ENCODE measurements at regions of chr4 and their contacts with region 1.

Region 1: GRCh38 chr4:78951862-78952472 is 12.7 kb upstream of the PAQR3 start:
- DNase-seq: peak; percentile 42
- H3K4me3 ChIP-seq: no peak overlapping the region
- H3K27ac ChIP-seq: no peak overlapping the region
- H3K4me1 ChIP-seq: no peaks in the 10 kb centered on the region
- H3K27me3 ChIP-seq: peaks cover 5 to 9% of the 10 kb centered on the region in 2 experiments
- CTCF ChIP-seq: peak; percentile 47 to 50
- POLR2A ChIP-seq: no peak

Region 2: DNA sequence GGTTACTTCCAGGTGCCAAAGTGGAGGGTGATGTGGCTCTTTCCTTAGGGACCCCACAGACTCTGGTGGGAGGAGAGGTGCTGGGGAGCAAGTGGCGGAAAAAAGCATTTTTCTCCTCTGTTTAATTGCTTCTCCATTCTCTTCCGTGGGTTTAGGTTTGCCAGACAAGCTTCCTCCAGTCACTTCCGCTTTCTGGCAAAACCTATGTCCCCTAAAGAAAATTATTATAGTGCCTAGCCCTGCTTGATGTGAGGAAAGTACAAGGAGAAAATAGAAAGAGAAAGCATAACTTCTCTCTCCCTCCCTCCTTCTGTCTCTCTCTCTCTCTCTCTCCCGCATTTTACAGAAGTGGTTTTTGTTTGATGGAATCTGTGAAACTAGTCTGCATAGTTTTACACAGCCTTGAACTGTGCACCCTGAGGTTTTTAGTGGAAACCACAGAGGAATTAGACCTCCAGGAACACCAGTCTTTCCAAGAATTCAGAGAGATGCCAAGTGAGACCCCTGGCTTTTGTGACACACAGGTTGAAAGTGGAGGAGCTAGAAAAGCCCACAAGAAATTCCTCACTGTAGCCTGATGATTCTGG is 631.5 kb before region 1 on chr4:
- CTCF ChIA-PET with region 1: no interaction called
- POLR2A ChIA-PET with region 1: no interaction called
- dilution Hi-C with region 1: no loop called
- intact Hi-C with region 1: no loop called
- DNase-seq: no peak
- H3K4me3 ChIP-seq: no peak overlapping the region
- H3K27ac ChIP-seq: no peak overlapping the region
- H3K4me1 ChIP-seq: no peaks in the 10 kb centered on the region
- H3K27me3 ChIP-seq: peaks cover 0 to 2% of the 10 kb centered on the region in 2 experiments
- CTCF ChIP-seq: no peak
- POLR2A ChIP-seq: no peak

Region 3: GRCh38 chr4:79025170-79025569 is 73.2 kb after region 1 on chr4:
- CTCF ChIA-PET with region 1: no interaction called
- POLR2A ChIA-PET with region 1: no interaction called
- dilution Hi-C with region 1: no loop called
- intact Hi-C with region 1: no loop called
- DNase-seq: no peak
- H3K4me3 ChIP-seq: no peak overlapping the region
- H3K27ac ChIP-seq: no peak overlapping the region
- H3K4me1 ChIP-seq: no peaks in the 10 kb centered on the region
- H3K27me3 ChIP-seq: no peaks in the 10 kb centered on the region
- CTCF ChIP-seq: no peak
- POLR2A ChIP-seq: no peak

Region 4: GRCh38 chr4:79042079-79042674 is 90.2 kb after region 1 on chr4:
- CTCF ChIA-PET with region 1: no interaction called
- POLR2A ChIA-PET with region 1: no interaction called
- dilution Hi-C with region 1: no loop called
- intact Hi-C with region 1: loop called (anchors 5 kb)
- DNase-seq: peak; percentile 32
- H3K4me3 ChIP-seq: no peak overlapping the region
- H3K27ac ChIP-seq: no peak overlapping the region
- H3K4me1 ChIP-seq: no peaks in the 10 kb centered on the region
- H3K27me3 ChIP-seq: no peaks in the 10 kb centered on the region
- CTCF ChIP-seq: peak; percentile 11 to 15
- POLR2A ChIP-seq: no peak

Region 5: GRCh38 chr4:79249881-79250503 is 298.0 kb after region 1 on chr4:
- CTCF ChIA-PET with region 1: no interaction called
- POLR2A ChIA-PET with region 1: no interaction called
- dilution Hi-C with region 1: no loop called
- intact Hi-C with region 1: no loop called
- DNase-seq: no peak
- H3K4me3 ChIP-seq: no peak overlapping the region
- H3K27ac ChIP-seq: no peak overlapping the region
- H3K4me1 ChIP-seq: no peaks in the 10 kb centered on the region
- H3K27me3 ChIP-seq: no peaks in the 10 kb centered on the region
- CTCF ChIP-seq: no peak
- POLR2A ChIP-seq: no peak

Region 6: GRCh38 chr4:79917246-79917645 is 965.3 kb after region 1 on chr4:
- CTCF ChIA-PET with region 1: no interaction called
- POLR2A ChIA-PET with region 1: no interaction called
- dilution Hi-C with region 1: no loop called
- intact Hi-C with region 1: loop called (anchors 5 kb)
- DNase-seq: peak; percentile 62
- H3K4me3 ChIP-seq: no peak overlapping the region
- H3K27ac ChIP-seq: no peak overlapping the region
- H3K4me1 ChIP-seq: no peaks in the 10 kb centered on the region
- H3K27me3 ChIP-seq: no peaks in the 10 kb centered on the region
- CTCF ChIP-seq: peak; percentile 73 to 78
- POLR2A ChIP-seq: no peak

Region 7: DNA sequence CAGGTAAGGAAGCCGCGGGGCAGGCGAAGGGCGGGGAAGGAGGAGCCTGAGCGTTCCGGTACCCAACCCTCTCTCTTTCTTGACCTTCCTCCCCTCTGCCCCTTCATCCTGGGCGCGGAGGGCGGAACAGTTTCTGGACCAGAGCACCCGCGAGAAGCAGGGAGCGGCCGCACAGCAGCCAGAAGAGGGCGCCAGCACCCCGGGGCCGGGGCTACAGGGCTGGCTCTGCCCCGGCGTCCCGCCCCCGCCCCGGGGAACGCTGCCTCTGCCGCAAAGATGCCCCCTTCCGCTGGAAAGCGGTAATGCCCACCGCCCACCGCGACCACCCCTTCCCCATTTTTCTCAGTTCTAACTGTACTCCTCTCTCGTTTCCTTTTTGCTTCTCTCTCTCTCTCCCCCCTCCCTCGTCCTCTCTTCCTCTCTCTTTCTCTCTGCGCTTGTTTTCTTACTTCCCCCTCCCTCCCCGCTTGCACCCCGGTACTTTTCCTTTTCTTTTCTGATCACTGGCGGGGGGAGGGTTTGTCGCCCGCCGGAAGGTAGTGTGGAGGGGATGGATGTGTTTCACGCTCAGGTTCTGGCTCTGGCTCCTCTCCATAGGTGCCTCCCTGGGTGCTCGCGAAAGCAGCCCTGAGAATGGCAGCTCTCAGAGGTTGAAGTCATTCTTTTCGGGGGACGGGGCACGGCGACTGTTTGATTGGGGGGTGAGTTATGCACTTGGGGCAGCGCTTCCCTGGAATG is 1232.3 kb after region 1 on chr4:
- CTCF ChIA-PET with region 1: no interaction called
- POLR2A ChIA-PET with region 1: no interaction called
- dilution Hi-C with region 1: no loop called
- intact Hi-C with region 1: loop called (anchors 1 kb)
- DNase-seq: peak; percentile 58
- H3K4me3 ChIP-seq: peak overlapping the region; percentile 56 to 99 (median 68)
- H3K27ac ChIP-seq: no peak overlapping the region
- H3K4me1 ChIP-seq: peaks cover 27% of the 10 kb centered on the region
- H3K27me3 ChIP-seq: peaks cover 43 to 48% of the 10 kb centered on the region in 2 experiments
- CTCF ChIP-seq: peak; percentile 83 to 91
- POLR2A ChIP-seq: no peak

Region 8: GRCh38 chr4:80335554-80336358 is 1383.8 kb after region 1 on chr4 and contains the start of gene CFAP299:
- CTCF ChIA-PET with region 1: interaction called, 30 read pairs
- POLR2A ChIA-PET with region 1: no interaction called
- dilution Hi-C with region 1: no loop called
- intact Hi-C with region 1: loop called (anchors 2 kb)
- DNase-seq: peak; percentile 68
- H3K4me3 ChIP-seq: peak within 1 kb of the TSS; percentile 37 to 67 (median 46)
- H3K27ac ChIP-seq: no peak within 1 kb of the TSS
- H3K4me1 ChIP-seq: peaks cover 6% of the 10 kb centered on the region
- H3K27me3 ChIP-seq: peaks cover 18 to 63% of the 10 kb centered on the region in 2 experiments
- CTCF ChIP-seq: peak; percentile 54 to 67
- POLR2A ChIP-seq: no peak
- total RNA-seq, gene CFAP299: not detected in 2 replicates